ENCODE measurements at regions of chr2 and their contacts with region 1.

Region 1: GRCh38 chr2:219142329-219142728 is 18.3 kb downstream of the NHEJ1 start:
- DNase-seq: peak; percentile 88
- H3K4me3 Mint-ChIP-seq: no peak overlapping the region
- H3K27ac Mint-ChIP-seq: peak overlapping the region; percentile 44
- H3K4me1 Mint-ChIP-seq: peaks cover 27% of the 10 kb centered on the region
- H3K27me3 Mint-ChIP-seq: no peaks in the 10 kb centered on the region
- CTCF ChIP-seq: no peak

Region 2: DNA sequence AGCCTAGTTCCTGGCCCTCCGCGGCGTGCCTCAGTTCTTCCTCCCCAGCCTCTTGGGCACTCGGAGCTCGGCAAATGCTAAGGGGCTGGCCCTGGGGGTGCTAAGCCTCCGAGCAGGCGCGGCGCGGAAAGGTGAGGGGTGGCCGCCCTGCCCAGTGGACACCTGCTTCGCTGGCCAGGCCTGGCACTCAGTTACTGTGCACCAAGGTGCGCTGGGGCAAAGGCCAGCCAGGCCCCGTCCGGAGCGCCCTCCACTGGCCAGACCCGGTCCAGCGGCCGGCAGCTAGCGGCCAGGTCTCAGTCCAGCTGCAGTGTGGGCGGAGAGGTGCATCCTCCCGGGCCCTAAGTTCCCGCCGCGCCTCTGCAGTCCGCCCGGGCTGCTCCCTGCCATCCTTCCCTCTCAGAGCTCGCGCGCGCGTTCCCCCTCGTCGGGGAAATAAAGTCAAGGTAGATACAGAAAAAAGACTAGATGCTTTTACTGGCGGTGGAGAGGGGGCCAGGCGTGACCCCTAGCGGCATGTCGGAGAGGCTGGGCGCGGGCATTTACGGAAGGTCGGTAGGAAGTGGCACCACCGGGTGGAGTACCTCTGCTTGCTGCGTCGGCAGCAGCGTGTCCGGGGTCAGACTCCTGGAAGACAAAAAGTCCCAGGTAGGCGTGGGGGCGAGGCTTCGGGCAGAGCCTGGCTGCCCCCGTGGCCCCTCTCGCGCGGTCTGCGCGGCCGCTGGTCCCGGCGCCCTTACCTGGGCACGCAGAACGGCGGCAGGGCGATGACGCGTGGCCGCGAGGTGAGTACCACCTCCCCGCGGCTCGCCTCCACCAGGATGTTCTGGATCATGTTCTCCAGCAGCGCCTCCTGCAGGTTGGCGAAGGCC is 139.7 kb before region 1 on chr2:
- CTCF ChIA-PET with region 1: interaction called, 10 read pairs
- POLR2A ChIA-PET with region 1: no interaction called
- intact Hi-C with region 1: no loop called
- DNase-seq: peak; percentile 33
- H3K4me3 Mint-ChIP-seq: peak overlapping the region; percentile 16
- H3K27ac Mint-ChIP-seq: no peak overlapping the region
- H3K4me1 Mint-ChIP-seq: peaks cover 15% of the 10 kb centered on the region
- H3K27me3 Mint-ChIP-seq: peaks cover 36% of the 10 kb centered on the region
- CTCF ChIP-seq: peak; percentile 53

Region 3: GRCh38 chr2:219099329-219099728 is 43.0 kb before region 1 on chr2:
- CTCF ChIA-PET with region 1: no interaction called
- POLR2A ChIA-PET with region 1: no interaction called
- intact Hi-C with region 1: no loop called
- DNase-seq: no peak
- H3K4me3 Mint-ChIP-seq: no peak overlapping the region
- H3K27ac Mint-ChIP-seq: no peak overlapping the region
- H3K4me1 Mint-ChIP-seq: no peaks in the 10 kb centered on the region
- H3K27me3 Mint-ChIP-seq: no peaks in the 10 kb centered on the region
- CTCF ChIP-seq: no peak

Region 4: GRCh38 chr2:219125225-219125885 is 17.0 kb before region 1 on chr2:
- CTCF ChIA-PET with region 1: interaction called, 6 read pairs
- POLR2A ChIA-PET with region 1: no interaction called
- intact Hi-C with region 1: loop called (anchors 2 kb)
- DNase-seq: peak; percentile 92
- H3K4me3 Mint-ChIP-seq: peak overlapping the region; percentile 33
- H3K27ac Mint-ChIP-seq: peak overlapping the region; percentile 93
- H3K4me1 Mint-ChIP-seq: peaks cover 43% of the 10 kb centered on the region
- H3K27me3 Mint-ChIP-seq: no peaks in the 10 kb centered on the region
- CTCF ChIP-seq: no peak

Measured in MCF 10A (cell line).